ENCODE measurements at regions of chr6 and their contacts with region 1.

Region 1: DNA sequence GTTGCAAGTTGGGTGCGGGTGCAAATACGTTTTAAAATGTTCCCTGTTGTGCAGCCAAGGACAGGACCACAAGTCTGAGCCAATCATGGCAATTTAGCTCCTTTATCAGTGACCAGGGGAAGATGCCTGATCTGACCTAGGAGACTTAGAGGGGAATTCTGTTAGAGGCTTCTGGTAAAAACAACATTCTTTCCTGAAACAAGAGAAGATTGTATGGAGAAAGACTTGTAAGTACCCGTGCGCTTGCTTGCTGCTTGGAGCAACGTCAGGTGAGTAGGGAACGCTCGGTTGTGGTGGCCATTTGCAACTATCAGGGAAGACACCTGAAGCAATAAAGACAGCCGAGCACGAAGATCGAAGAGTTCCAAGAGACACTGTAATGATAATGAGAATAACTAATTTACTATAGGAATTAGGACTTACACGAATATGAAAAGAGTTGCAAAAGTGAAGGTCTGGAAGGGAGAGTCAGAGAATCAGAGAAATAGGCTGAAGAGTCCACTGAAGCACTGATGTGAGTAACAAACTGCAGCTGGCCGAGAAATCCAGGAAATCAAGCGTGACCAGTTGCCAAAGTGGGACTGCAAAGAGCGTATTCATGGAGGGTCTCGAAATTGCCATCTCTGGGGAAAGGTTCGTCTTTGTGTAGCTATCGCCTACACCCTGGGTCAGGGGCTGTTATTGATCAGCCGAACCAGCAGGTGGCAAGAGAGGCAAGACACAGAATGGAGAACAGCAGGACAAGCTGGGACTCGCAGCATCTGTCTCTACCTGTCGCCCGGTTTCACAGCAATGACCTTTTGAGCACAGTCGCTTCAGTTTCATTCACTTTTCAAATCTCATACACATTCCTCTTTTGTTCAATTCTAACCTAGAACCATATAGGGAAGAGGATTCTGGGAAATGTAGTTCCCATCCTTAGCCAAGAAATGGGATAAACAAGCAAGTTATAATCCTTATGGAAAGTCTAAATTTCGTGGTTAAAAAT is 26.1 kb downstream of the LOC128125822 start:
- H3K4me3 ChIP-seq: peak overlapping the region; percentile 60
- H3K27ac ChIP-seq: peak overlapping the region; percentile 13; the same call in 1 of the 2 replicates
- H3K4me1 ChIP-seq: no peaks in the 10 kb centered on the region
- CTCF ChIP-seq: peak; percentile 92

Region 2: DNA sequence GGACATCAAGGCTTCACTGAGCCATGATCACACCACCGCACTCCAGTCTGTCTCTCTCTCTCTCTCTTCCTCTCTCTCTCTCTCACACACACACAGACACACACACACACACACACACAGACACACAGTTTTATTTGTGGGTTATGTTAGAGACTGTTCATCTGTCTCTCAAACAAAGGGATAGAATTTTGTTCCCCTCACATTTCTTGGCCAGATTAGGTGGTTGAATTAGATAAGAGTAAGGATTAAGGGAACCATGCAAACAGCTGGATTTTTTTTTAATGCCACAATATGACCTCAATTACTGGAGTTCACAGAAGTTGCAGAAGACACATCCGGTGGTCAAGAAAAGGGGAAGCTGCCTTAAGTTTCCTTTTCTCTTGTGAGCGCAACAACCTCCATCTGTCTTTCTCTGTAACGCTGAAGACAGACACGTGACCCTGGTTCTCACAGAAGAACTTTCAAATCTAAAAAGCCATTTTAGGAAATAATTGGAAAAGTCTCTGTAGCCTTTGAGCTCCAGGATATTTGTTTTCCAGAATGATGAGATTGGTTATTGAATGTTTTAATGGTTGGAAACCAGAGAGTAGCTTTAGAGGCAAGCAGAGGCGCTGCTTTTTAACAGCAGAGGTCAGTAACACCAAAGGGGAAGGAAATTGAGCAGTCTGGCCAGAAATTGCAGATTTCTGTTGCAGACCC is 245.6 kb before region 1 on chr6:
- CTCF ChIA-PET with region 1: interaction called, 15 read pairs
- POLR2A ChIA-PET with region 1: no interaction called
- H3K4me3 ChIP-seq: no peak overlapping the region
- H3K27ac ChIP-seq: no peak overlapping the region
- H3K4me1 ChIP-seq: no peaks in the 10 kb centered on the region; the same call in 1 of the 2 replicates
- CTCF ChIP-seq: peak; percentile 59

Region 3: GRCh38 chr6:63558278-63558677 is 40.1 kb before region 1 on chr6:
- CTCF ChIA-PET with region 1: no interaction called
- POLR2A ChIA-PET with region 1: no interaction called
- H3K4me3 ChIP-seq: no peak overlapping the region
- H3K27ac ChIP-seq: no peak overlapping the region
- H3K4me1 ChIP-seq: no peaks in the 10 kb centered on the region
- CTCF ChIP-seq: no peak

Region 4: DNA sequence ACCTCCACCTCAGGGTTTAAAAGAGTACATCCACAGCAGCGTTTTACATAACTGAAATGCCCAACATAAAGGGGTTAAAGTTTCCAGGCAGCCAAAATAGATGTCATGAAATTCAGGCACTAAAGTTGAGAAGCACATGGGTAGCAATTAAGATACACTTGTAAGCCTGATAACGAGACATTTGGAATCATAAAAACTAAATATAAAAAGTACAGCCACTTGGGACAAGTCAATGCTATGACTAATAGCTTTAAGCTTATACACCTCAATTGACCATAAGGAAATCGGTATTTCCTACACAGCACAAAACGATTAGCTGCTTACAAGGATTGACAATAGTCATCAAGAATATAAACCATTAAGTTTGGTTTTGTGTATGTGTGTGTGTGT is 14.2 kb before region 1 on chr6:
- CTCF ChIA-PET with region 1: interaction called, 13 read pairs
- POLR2A ChIA-PET with region 1: interaction called, 5 read pairs
- H3K4me3 ChIP-seq: no peak overlapping the region
- H3K27ac ChIP-seq: no peak overlapping the region
- H3K4me1 ChIP-seq: no peaks in the 10 kb centered on the region
- CTCF ChIP-seq: no peak

Region 5: DNA sequence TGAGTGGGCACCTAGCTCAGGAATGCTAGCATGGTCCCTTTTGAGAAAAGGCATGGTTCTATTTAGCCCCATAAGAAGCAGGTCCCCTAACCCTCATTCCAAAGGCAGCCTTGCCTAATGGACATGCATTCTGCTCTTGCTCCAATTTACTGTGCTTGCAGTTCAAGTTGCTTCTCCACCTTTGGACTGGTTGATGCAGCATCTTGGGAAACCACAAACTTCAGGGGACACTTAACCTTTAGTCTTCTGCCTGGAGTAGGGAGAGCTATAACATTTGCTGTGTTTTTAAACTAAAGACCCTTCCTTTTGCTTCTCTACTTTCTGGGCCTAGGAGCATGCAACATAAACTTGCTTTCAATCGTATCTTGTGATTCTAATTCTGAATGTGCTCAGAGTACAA is 32.1 kb after region 1 on chr6:
- CTCF ChIA-PET with region 1: interaction called, 17 read pairs
- POLR2A ChIA-PET with region 1: interaction called, 18 read pairs
- H3K4me3 ChIP-seq: no peak overlapping the region
- H3K27ac ChIP-seq: no peak overlapping the region
- H3K4me1 ChIP-seq: peaks cover 16% of the 10 kb centered on the region
- CTCF ChIP-seq: no peak

Region 6: GRCh38 chr6:63764318-63764916 is 166.1 kb after region 1 on chr6:
- CTCF ChIA-PET with region 1: interaction called, 56 read pairs
- POLR2A ChIA-PET with region 1: interaction called, 4 read pairs
- H3K4me3 ChIP-seq: no peak overlapping the region
- H3K27ac ChIP-seq: no peak overlapping the region
- H3K4me1 ChIP-seq: no peaks in the 10 kb centered on the region
- CTCF ChIP-seq: no peak